Caco-2 (cell line): ENCODE measurements at regions of chr1 and their contacts with region 1.

Region 1: DNA sequence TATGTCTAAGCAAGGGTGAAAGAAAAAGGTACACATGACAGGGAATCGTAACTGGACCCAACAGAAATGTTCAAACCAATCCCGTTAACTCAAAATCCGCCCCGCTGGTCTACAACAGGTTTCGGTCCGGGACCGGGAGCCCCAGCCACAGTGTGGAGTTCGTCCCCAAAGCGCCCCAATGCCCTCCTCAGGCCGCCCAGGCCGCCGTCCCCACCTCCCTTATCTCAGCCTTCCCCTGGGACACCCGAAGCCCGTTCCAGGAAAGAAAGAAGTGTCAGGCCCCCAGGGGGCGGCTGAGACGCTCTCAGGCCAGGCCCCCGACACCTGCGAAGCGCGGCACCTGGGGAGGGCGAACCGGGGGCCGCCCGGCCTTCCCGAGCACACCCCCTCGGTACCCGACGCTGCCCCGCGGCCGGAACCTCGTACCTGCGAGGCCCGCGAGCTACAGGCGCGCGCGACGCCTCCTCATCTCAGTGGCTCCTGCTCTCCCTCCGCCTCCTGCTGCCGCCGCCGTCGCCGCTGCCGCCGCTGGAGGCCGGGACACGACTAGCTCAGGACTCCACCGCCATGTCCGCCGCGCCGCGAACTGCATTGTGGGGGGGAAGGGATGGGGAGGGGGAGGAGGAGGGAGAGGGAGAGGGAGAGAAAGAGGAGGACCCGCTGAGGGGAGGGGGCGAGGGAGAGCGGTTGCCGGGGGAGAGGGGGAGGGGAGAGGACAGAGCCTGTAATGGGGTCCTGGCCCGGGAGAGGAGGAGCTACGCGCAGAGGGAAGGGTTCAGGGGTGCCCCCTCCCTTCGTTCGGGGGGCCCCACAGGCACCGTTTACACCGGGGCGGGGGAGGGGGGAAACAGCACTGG is at the start of gene TUT4:
- DNase-seq: peak; percentile 83 to 89
- H3K4me3 ChIP-seq: peak within 1 kb of the TSS; percentile 89
- H3K4me3 Mint-ChIP-seq: no peak within 1 kb of the TSS
- H3K27ac Mint-ChIP-seq: no peak within 1 kb of the TSS
- H3K4me1 ChIP-seq: peaks cover 28% of the 10 kb centered on the region; the same call in 1 of the 2 replicates
- H3K4me1 Mint-ChIP-seq: peaks cover 35% of the 10 kb centered on the region
- H3K27me3 ChIP-seq: no peaks in the 10 kb centered on the region
- H3K27me3 Mint-ChIP-seq: no peaks in the 10 kb centered on the region
- CTCF ChIP-seq: peak in 1 of 2 experiments; percentile 43
- total RNA-seq, gene TUT4: 54.9 and 57.6 TPM in 2 replicates

Region 2: DNA sequence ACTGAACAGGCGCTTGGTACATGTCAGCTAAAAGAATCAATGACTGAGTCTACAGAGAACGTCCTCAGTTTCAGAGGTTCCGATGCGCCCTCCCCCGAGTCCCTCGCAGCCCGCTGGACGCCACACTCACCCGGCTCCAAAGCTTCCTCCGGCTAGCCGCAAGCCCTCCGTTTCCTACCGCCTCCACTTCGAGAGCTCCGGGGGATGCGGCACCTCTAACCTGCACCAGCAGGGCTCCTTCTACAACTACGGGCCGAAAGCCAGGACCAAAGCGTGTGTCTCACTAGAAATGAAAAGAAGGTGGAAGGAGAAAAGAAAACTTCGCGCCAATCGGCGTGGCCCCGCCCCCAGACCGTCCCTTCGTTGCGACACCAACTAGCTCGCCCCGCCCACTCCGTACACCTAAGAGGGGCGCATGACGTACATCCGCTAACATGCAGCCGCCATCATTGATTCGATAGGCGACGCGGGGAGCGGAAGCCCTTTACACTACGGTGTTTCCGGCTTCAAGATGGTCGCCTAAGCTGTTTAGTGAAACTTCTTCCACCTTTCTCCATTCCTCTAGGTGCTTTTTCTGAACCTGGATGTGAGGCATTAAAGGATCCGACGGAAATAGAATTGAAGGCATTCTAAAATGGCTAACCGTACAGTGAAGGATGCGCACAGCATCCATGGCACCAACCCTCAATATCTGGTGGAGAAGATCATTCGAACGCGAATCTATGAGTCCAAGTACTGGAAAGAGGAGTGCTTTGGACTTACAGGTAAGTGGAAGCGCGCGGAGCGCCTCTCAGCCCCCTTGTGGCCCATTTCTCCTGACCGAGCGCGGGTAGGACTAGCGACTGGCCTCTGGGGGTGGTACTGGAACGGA is 148.4 kb before region 1 on chr1 and contains the starts of genes ORC1 and PRPF38A:
- CTCF ChIA-PET with region 1: no interaction called
- POLR2A ChIA-PET with region 1: interaction called, 14 read pairs
- intact Hi-C with region 1: no loop called
- DNase-seq: peak; percentile 93 to 94
- H3K4me3 ChIP-seq: peak within 1 kb of the TSS; percentile 60
- H3K4me3 Mint-ChIP-seq: peak within 1 kb of the TSS; percentile 87
- H3K27ac Mint-ChIP-seq: peak within 1 kb of the TSS; percentile 91
- H3K4me1 ChIP-seq: peaks cover 17% of the 10 kb centered on the region
- H3K4me1 Mint-ChIP-seq: no peaks in the 10 kb centered on the region
- H3K27me3 ChIP-seq: no peaks in the 10 kb centered on the region
- H3K27me3 Mint-ChIP-seq: no peaks in the 10 kb centered on the region
- CTCF ChIP-seq: peak; percentile 45 to 75
- total RNA-seq, gene ORC1: 12.1 and 14.0 TPM in 2 replicates
- total RNA-seq, gene PRPF38A: 40.4 and 43.1 TPM in 2 replicates

Region 3: GRCh38 chr1:52520148-52520547 is 32.6 kb before region 1 on chr1:
- CTCF ChIA-PET with region 1: no interaction called
- POLR2A ChIA-PET with region 1: no interaction called
- intact Hi-C with region 1: no loop called
- DNase-seq: no peak
- H3K4me3 ChIP-seq: no peak overlapping the region
- H3K4me3 Mint-ChIP-seq: no peak overlapping the region
- H3K27ac Mint-ChIP-seq: no peak overlapping the region
- H3K4me1 ChIP-seq: no peaks in the 10 kb centered on the region
- H3K4me1 Mint-ChIP-seq: no peaks in the 10 kb centered on the region
- H3K27me3 ChIP-seq: no peaks in the 10 kb centered on the region
- H3K27me3 Mint-ChIP-seq: no peaks in the 10 kb centered on the region
- CTCF ChIP-seq: no peak

Region 4: GRCh38 chr1:52632732-52633290 is 80.1 kb after region 1 on chr1 and contains the start of gene SHISAL2A:
- CTCF ChIA-PET with region 1: no interaction called
- POLR2A ChIA-PET with region 1: interaction called, 5 read pairs
- intact Hi-C with region 1: loop called (anchors 2 kb)
- DNase-seq: peak; percentile 64 to 74
- H3K4me3 ChIP-seq: peak within 1 kb of the TSS; percentile 60
- H3K4me3 Mint-ChIP-seq: peak within 1 kb of the TSS; percentile 81
- H3K27ac Mint-ChIP-seq: peak within 1 kb of the TSS; percentile 60
- H3K4me1 ChIP-seq: peaks cover 14% of the 10 kb centered on the region
- H3K4me1 Mint-ChIP-seq: peaks cover 8% of the 10 kb centered on the region
- H3K27me3 ChIP-seq: no peaks in the 10 kb centered on the region
- H3K27me3 Mint-ChIP-seq: no peaks in the 10 kb centered on the region
- CTCF ChIP-seq: no peak
- total RNA-seq, gene SHISAL2A: 3.2 and 3.7 TPM in 2 replicates

Region 5: DNA sequence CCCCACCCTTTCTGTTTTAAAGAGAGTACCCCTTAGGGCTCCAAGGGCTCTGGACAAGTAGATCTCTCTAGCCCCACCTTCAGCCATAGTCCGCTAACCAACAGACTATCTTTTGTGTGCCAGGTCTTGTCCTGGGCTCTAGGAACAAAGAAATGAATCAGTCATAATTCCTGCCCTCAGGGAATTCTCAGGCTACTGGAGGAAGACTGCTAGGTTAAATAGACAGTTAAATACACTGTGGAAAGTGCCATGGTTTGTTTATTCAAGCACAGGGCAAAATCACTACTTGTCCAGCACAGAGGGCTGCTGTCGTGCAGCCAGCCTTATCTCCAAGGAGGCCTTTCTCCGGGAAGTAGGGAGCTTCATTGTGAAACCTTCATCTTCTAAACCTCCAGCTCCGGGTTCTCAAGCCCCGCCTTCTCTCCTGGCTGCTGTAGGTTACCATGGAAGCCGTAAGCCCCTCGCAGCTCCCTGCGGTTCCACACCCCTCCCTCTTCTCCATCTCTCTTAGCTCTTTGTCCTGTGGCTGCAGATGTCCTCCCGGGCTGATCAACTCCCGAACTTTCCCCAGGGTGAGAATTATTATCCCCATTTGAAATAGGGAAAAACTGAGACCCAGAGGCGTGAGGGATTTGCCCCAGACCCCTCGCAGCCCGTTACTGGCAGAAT is 110.0 kb after region 1 on chr1:
- CTCF ChIA-PET with region 1: interaction called, 3 read pairs
- POLR2A ChIA-PET with region 1: no interaction called
- intact Hi-C with region 1: loop called (anchors 1 kb)
- DNase-seq: peak; percentile 53 to 66
- H3K4me3 ChIP-seq: no peak overlapping the region
- H3K4me3 Mint-ChIP-seq: no peak overlapping the region
- H3K27ac Mint-ChIP-seq: no peak overlapping the region
- H3K4me1 ChIP-seq: peaks cover 12% of the 10 kb centered on the region; the same call in 1 of the 2 replicates
- H3K4me1 Mint-ChIP-seq: peaks cover 6% of the 10 kb centered on the region
- H3K27me3 ChIP-seq: no peaks in the 10 kb centered on the region
- H3K27me3 Mint-ChIP-seq: no peaks in the 10 kb centered on the region
- CTCF ChIP-seq: no peak

Region 6: DNA sequence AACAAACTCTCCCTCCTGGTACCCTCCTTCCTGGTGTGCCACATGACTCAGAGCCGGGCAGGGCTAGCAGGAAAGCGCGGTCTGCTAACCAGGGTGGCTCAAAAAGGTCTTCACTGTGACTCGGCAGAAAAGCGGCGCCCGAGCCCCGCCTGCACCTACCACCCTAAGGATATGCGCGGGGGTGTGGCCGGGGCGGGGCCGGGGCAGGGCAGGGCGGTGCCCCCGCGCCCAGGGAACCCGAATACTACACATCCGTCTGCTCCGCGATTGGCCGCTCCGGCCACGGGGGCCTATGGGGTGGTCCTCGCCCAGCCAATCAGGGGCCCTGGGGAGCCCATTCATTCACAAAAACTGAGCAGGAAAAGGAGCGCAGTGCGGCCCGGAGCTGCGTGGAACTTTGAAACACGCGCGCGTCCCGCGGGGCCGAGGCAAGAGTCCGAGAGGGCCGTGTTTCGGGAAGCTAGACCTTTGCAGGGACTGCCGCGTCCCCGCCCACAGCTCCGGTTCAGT is 773.4 kb after region 1 on chr1:
- CTCF ChIA-PET with region 1: no interaction called
- POLR2A ChIA-PET with region 1: interaction called, 10 read pairs
- intact Hi-C with region 1: no loop called
- DNase-seq: peak; percentile 90 to 91
- H3K4me3 ChIP-seq: peak overlapping the region; percentile 66
- H3K4me3 Mint-ChIP-seq: peak overlapping the region; percentile 81
- H3K27ac Mint-ChIP-seq: peak overlapping the region; percentile 93
- H3K4me1 ChIP-seq: peaks cover 29% of the 10 kb centered on the region
- H3K4me1 Mint-ChIP-seq: peaks cover 11% of the 10 kb centered on the region
- H3K27me3 ChIP-seq: no peaks in the 10 kb centered on the region
- H3K27me3 Mint-ChIP-seq: no peaks in the 10 kb centered on the region
- CTCF ChIP-seq: no peak